HAP-1 (cell line): ENCODE measurements at regions of chr20 and their contacts with region 1.

Region 1: DNA sequence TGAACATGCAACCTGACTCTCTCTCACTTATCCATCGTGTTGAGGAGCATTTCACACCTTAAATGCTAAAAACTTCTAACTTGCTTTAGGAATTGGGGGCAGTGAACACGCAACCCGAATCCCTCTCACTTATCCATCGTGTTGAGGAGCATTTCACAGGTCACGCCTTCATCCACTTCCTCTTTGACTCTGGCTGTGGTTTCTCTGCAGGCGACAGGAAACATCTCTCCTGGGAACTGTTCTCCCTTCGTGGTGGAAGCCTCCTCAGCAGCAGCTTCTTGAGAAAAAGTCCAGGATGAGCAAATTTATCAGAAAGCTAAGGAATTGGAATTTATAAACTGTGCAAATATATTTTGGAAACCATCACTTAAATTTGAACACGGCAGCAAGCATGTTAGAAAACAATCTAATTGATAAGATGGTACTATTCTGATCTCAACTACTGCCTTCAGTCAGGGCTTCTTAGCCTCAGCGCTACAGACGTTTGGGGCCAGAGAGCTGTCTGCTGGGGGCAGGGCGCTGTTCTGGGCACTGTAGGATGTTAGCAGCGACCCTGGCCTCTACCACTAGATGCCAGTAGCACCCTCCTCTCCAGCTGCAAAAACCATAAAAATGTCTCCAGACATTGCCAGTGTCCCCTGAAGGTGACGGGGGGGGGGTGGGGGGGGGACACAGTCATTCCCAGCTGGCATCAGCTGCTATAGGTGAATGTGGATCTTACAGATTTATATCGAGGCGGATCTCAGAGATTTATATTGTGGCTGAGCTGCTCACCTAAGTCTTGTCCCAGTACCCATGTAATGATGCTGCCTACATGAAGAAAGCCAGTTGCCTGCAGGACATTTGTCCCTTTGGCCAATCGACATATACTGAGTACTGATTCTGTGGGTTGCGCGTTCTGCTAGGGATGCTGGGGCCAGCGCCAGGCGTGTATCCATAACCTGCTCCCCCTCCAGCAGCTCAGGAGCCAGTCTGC is 26.2 kb downstream of the CTCFL start:
- DNase-seq: peak in 1 of 2 experiments; percentile 48
- H3K4me3 ChIP-seq: no peak overlapping the region
- H3K4me1 ChIP-seq: peaks cover 3% of the 10 kb centered on the region
- H3K27me3 ChIP-seq: peaks cover 8% of the 10 kb centered on the region

Region 2: GRCh38 chr20:56636716-56637115 is 862.0 kb before region 1 on chr20:
- in situ Hi-C with region 1: no loop called
- DNase-seq: peak; percentile 48 to 96
- H3K4me3 ChIP-seq: no peak overlapping the region
- H3K4me1 ChIP-seq: peaks cover 52% of the 10 kb centered on the region
- H3K27me3 ChIP-seq: no peaks in the 10 kb centered on the region

Region 3: GRCh38 chr20:57089691-57090150 is 409.0 kb before region 1 on chr20:
- in situ Hi-C with region 1: loop called (anchors 25 kb)
- DNase-seq: peak; percentile 25 to 89
- H3K4me3 ChIP-seq: no peak overlapping the region
- H3K4me1 ChIP-seq: no peaks in the 10 kb centered on the region; the same call in 1 of the 2 replicates
- H3K27me3 ChIP-seq: peaks cover 3% of the 10 kb centered on the region; the same call in 1 of the 2 replicates